Dorsolateral prefrontal cortex (tissue), 120 donors: ENCODE measurements at regions of chrX and their contacts with region 1.

Region 1: GRCh38 chrX:8743126-8743732 is 11.3 kb upstream of the ANOS1 start:
- DNase-seq: peak in 3 of 10 donors; percentile 13 to 52 (median 33)
- H3K4me3 ChIP-seq: no peak overlapping the region
- H3K27ac ChIP-seq: no peak overlapping the region
- H3K27me3 ChIP-seq: peaks cover 0 to 59% (median 17%) of the 10 kb centered on the region in 45 donors
- CTCF ChIP-seq: peak; percentile 21 to 70 (median 54)

Region 2: DNA sequence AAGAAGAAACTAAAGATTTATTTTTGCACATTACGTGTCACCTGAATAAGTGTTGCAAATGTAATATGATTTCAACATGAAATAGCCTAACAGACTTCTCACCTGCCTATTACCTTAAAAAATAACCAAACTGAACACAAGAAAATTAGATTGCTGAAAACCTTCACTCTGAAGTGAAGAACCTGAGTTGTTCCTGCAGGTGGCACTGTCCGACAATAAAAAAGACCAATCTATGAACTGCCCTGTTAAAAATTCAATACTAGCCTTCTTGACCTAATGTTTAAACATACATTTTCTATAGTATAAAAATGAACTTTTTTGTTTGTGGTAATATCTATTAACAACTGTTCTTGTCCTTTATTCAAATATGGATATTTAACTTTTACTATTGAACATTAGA is 746.8 kb before region 1 on chrX:
- intact Hi-C with region 1: loop called (anchors 5 kb)
- DNase-seq: peak in 1 of 10 donors; percentile 24
- H3K4me3 ChIP-seq: no peak overlapping the region
- H3K27ac ChIP-seq: no peak overlapping the region
- H3K27me3 ChIP-seq: peaks cover 0 to 46% (median 0%) of the 10 kb centered on the region in 45 donors
- CTCF ChIP-seq: peak; percentile 21 to 86 (median 65)

Region 3: DNA sequence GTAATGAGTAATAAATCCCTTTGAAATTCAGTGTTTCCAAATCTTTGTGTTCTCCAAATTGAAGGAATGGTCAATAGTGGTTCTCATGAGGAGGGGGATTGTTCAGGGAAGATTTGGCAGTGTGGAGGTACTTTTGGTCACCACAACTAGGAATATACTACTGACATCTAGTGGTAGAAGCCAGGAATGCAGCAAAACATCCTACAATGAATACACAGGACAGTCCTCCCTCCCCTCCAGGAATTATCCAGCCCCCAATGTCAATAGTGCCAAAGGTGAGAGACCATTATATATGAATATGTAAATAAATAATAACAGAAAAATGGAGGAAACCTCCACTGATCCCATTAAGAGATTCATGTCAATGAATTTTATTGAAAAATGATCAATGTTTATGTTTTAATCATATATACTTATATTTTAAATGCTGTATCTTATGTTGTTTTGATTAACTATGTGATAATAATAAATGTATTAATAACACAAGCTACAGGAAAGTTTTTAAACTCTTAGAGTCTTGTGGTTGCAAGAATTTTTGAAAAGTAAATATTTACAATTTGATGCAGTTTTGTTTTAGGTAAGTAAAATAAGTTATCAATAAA is 72.3 kb after region 1 on chrX:
- intact Hi-C with region 1: loop called in 1 of 2 experiments (anchors 10 kb)
- DNase-seq: peak in 1 of 10 donors; percentile 5
- H3K4me3 ChIP-seq: no peak overlapping the region
- H3K27ac ChIP-seq: no peak overlapping the region
- H3K27me3 ChIP-seq: peaks cover 0 to 40% (median 7%) of the 10 kb centered on the region in 45 donors
- CTCF ChIP-seq: peak; percentile 46 to 89 (median 79)